ENCODE measurements at regions of chr2 and their contacts with region 1.

Region 1: GRCh38 chr2:165401285-165401852 is 68.1 kb upstream of the CSRNP3 start:
- DNase-seq: no peak
- H3K4me3 ChIP-seq: no peak overlapping the region
- H3K27ac ChIP-seq: no peak overlapping the region
- H3K4me1 ChIP-seq: peaks cover 0 to 8% (median 0%) of the 10 kb centered on the region in 4 donors
- H3K27me3 ChIP-seq: no peaks in the 10 kb centered on the region
- CTCF ChIP-seq: peak; percentile 33 to 66 (median 56)
- EP300 ChIP-seq: no peak
- POLR2A ChIP-seq: no peak

Region 2: GRCh38 chr2:164675698-164676097 is 725.7 kb before region 1 on chr2:
- intact Hi-C with region 1: no loop called
- DNase-seq: no peak
- H3K4me3 ChIP-seq: no peak overlapping the region
- H3K27ac ChIP-seq: no peak overlapping the region
- H3K4me1 ChIP-seq: no peaks in the 10 kb centered on the region
- H3K27me3 ChIP-seq: no peaks in the 10 kb centered on the region
- CTCF ChIP-seq: no peak
- EP300 ChIP-seq: no peak
- POLR2A ChIP-seq: no peak

Region 3: DNA sequence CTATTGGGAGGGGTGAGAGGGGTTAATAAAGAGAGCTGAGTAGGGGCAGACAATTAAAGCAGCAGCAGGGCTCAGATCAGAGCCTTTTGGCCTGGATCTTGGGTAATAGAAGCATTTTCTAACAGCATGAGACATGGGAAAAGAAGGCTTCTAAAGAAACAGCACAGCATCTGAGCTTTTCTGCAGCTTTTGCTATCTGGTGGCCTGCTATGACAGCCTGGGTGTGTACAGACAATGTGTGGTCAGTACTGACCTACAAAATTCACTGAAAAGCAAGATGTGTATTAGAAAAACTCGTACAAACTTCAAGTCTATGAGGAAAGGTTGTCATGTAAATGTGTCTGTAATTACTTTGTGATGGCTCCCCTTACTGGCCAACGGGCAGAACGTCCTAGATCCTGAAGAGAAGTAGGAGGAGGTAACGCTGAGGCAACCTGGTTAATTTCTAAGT is 297.1 kb after region 1 on chr2:
- intact Hi-C with region 1: loop called (anchors 5 kb)
- DNase-seq: no peak
- H3K4me3 ChIP-seq: no peak overlapping the region
- H3K27ac ChIP-seq: no peak overlapping the region
- H3K4me1 ChIP-seq: no peaks in the 10 kb centered on the region
- H3K27me3 ChIP-seq: no peaks in the 10 kb centered on the region
- CTCF ChIP-seq: peak in 2 of 4 experiments; percentile 10 to 16
- EP300 ChIP-seq: no peak
- POLR2A ChIP-seq: no peak

Region 4: GRCh38 chr2:165874445-165875039 is 473.2 kb after region 1 on chr2:
- intact Hi-C with region 1: loop called (anchors 10 kb)
- DNase-seq: no peak
- H3K4me3 ChIP-seq: no peak overlapping the region
- H3K27ac ChIP-seq: no peak overlapping the region
- H3K4me1 ChIP-seq: no peaks in the 10 kb centered on the region
- H3K27me3 ChIP-seq: no peaks in the 10 kb centered on the region
- CTCF ChIP-seq: peak in 3 of 4 experiments; percentile 26 to 45 (median 39)
- EP300 ChIP-seq: no peak
- POLR2A ChIP-seq: no peak